PC-9 (cell line): ENCODE measurements at regions of chr12 and their contacts with region 1.

Region 1: GRCh38 chr12:71085575-71085974 is 72.2 kb downstream of the TSPAN8 start:
- DNase-seq: no peak
- H3K4me3 ChIP-seq: no peak overlapping the region
- H3K27ac ChIP-seq: no peak overlapping the region
- H3K4me1 ChIP-seq: no peaks in the 10 kb centered on the region
- H3K27me3 ChIP-seq: no peaks in the 10 kb centered on the region
- CTCF ChIP-seq: no peak

Region 2: GRCh38 chr12:71787580-71787979 is 702.0 kb after region 1 on chr12:
- CTCF ChIA-PET with region 1: no interaction called
- POLR2A ChIA-PET with region 1: interaction called, 15 read pairs
- intact Hi-C with region 1: no loop called
- DNase-seq: no peak
- H3K4me3 ChIP-seq: no peak overlapping the region
- H3K27ac ChIP-seq: no peak overlapping the region
- H3K4me1 ChIP-seq: no peaks in the 10 kb centered on the region
- H3K27me3 ChIP-seq: no peaks in the 10 kb centered on the region
- CTCF ChIP-seq: no peak